ENCODE measurements at regions of chrX and their contacts with region 1.

Region 1: DNA sequence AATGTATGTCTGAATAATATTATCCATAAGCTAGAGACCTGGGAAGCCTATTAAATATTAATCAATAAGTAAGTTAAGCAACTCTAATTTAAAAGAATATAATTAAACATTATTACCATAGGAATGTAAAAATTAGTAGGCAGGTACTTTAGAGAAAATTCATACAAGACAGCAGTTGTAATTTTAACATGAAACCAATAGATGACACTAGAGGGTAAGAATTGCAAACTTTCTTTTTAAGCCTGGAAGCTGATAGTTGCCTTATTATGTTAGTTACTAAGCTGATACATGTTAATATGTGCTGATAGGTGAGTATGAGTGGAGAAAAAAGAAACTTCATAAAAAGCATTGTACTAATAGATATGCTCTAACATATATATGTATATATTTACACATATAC is 1157.4 kb downstream of the FAM133A start:
- DNase-seq: no peak
- H3K4me3 ChIP-seq: no peak overlapping the region
- H3K27ac ChIP-seq: no peak overlapping the region
- H3K4me1 ChIP-seq: no peaks in the 10 kb centered on the region
- H3K27me3 ChIP-seq: no peaks in the 10 kb centered on the region
- CTCF ChIP-seq: peak; percentile 73

Region 2: DNA sequence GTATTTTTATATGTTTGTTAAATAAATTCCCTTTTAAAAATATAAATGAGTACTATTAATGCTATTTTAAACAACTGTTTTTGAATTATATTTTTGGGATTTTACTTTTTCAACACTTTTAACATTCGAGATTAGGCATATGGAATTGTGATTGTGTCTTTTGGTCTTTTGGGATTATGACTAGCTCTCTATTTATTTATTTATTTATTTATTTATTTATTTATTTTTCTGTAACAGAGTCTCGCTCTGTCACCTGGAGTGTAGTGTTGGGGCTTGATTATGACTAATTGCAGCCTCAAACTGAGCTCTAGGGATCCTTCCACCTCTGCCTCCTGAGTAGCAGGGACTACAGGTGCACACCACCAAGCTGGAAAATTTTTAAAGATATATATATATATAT is 55.7 kb before region 1 on chrX:
- CTCF ChIA-PET with region 1: no interaction called
- POLR2A ChIA-PET with region 1: no interaction called
- intact Hi-C with region 1: no loop called
- DNase-seq: no peak
- H3K4me3 ChIP-seq: no peak overlapping the region
- H3K27ac ChIP-seq: no peak overlapping the region
- H3K4me1 ChIP-seq: no peaks in the 10 kb centered on the region
- H3K27me3 ChIP-seq: no peaks in the 10 kb centered on the region
- CTCF ChIP-seq: no peak

Region 3: GRCh38 chrX:95076449-95076848 is 245.1 kb after region 1 on chrX:
- CTCF ChIA-PET with region 1: no interaction called
- POLR2A ChIA-PET with region 1: no interaction called
- intact Hi-C with region 1: loop called (anchors 10 kb)
- DNase-seq: no peak
- H3K4me3 ChIP-seq: no peak overlapping the region
- H3K27ac ChIP-seq: no peak overlapping the region
- H3K4me1 ChIP-seq: no peaks in the 10 kb centered on the region
- H3K27me3 ChIP-seq: no peaks in the 10 kb centered on the region
- CTCF ChIP-seq: peak; percentile 70